Activated T-helper 1 cell treated with anti-CD3 and anti-CD28 coated beads, Interleukin-12 subunit alpha, Interleukin-12 subunit beta, Interleukin-2, Interleukin-4 antibody, amounts not matched to agents 30 ng/mL and 10 ng/mL and 1 ng/mL, durations not matched to agents 14 hours and 24 hours and 36 hours (primary cell): ENCODE measurements at regions of chr13 and their contacts with region 1.

Region 1: GRCh38 chr13:70908795-70909194 is 800.5 kb upstream of the KLHL1 start:
- DNase-seq: no peak
- H3K4me3 Mint-ChIP-seq: no peak overlapping the region
- H3K27ac Mint-ChIP-seq: no peak overlapping the region
- H3K4me1 Mint-ChIP-seq: no peaks in the 10 kb centered on the region
- H3K27me3 Mint-ChIP-seq: no peaks in the 10 kb centered on the region

Region 2: DNA sequence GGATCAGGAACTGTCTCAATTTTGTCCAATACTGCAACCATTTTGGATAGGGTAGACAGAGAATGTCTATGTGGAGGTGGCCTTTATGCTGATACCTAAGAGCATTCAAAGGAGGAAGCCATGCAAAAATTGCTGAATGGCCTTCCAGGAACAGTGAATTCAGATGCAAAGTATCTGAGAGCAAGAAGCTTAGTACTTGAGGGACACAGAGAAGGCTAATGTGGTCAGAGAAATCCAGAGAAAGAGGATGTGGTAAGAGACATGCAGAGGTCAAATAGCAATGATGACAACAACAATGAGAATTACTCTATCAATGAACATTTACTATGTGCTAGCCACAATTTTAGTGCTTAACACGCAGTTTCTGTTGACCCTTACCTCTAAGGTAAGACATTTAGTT is 15.0 kb before region 1 on chr13:
- intact Hi-C with region 1: loop called (anchors 1 kb)
- DNase-seq: no peak
- H3K4me3 Mint-ChIP-seq: no peak overlapping the region
- H3K27ac Mint-ChIP-seq: no peak overlapping the region
- H3K4me1 Mint-ChIP-seq: no peaks in the 10 kb centered on the region
- H3K27me3 Mint-ChIP-seq: no peaks in the 10 kb centered on the region